ENCODE measurements at regions of chr12 and their contacts with region 1.

Region 1: GRCh38 chr12:76529226-76529918 is 30.2 kb downstream of the OSBPL8 start:
- DNase-seq: no peak
- ATAC-seq: no peak
- H3K4me3 Mint-ChIP-seq: no peak overlapping the region
- H3K27ac Mint-ChIP-seq: no peak overlapping the region
- H3K4me1 Mint-ChIP-seq: peaks cover 35% of the 10 kb centered on the region
- H3K27me3 Mint-ChIP-seq: no peaks in the 10 kb centered on the region
- CTCF ChIP-seq: no peak

Region 2: GRCh38 chr12:76544601-76545261 is 15.4 kb after region 1 on chr12:
- CTCF ChIA-PET with region 1: no interaction called
- POLR2A ChIA-PET with region 1: no interaction called
- intact Hi-C with region 1: loop called (anchors 2 kb)
- DNase-seq: no peak
- ATAC-seq: no peak
- H3K4me3 Mint-ChIP-seq: no peak overlapping the region
- H3K27ac Mint-ChIP-seq: no peak overlapping the region
- H3K4me1 Mint-ChIP-seq: peaks cover 53% of the 10 kb centered on the region
- H3K27me3 Mint-ChIP-seq: no peaks in the 10 kb centered on the region
- CTCF ChIP-seq: no peak

Region 3: DNA sequence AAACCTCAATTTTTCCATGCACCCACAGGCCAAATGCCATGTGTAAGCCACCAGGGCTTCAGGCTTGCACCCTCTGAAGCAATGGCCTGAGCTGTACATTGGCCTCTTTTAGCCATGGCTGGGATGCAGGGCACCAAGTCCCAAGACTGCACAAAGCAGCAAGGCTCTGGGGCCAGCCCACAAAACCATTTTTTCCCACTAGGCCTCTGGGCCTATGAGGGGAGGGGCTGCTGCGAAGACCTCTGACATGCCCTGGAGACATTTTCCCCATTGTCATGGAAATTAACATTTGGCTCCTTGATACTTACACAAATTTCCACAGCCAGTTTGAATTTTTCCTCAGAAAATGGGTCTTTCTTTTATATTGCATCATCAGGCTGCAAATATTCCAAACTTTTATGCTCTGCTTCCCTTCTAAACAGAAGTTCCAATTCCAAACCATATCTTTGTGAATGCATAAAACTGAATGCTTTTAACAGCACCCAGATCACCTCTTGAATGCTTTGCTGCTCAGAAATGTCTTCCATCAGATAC is 44.5 kb after region 1 on chr12:
- CTCF ChIA-PET with region 1: no interaction called
- POLR2A ChIA-PET with region 1: interaction called, 11 read pairs
- intact Hi-C with region 1: no loop called
- DNase-seq: no peak
- ATAC-seq: no peak
- H3K4me3 Mint-ChIP-seq: no peak overlapping the region
- H3K27ac Mint-ChIP-seq: no peak overlapping the region
- H3K4me1 Mint-ChIP-seq: peaks cover 6% of the 10 kb centered on the region
- H3K27me3 Mint-ChIP-seq: no peaks in the 10 kb centered on the region
- CTCF ChIP-seq: no peak